Right ventricle myocardium inferior (tissue), 1 donor: ENCODE measurements at regions of chr7 and their contacts with region 1.

Region 1: DNA sequence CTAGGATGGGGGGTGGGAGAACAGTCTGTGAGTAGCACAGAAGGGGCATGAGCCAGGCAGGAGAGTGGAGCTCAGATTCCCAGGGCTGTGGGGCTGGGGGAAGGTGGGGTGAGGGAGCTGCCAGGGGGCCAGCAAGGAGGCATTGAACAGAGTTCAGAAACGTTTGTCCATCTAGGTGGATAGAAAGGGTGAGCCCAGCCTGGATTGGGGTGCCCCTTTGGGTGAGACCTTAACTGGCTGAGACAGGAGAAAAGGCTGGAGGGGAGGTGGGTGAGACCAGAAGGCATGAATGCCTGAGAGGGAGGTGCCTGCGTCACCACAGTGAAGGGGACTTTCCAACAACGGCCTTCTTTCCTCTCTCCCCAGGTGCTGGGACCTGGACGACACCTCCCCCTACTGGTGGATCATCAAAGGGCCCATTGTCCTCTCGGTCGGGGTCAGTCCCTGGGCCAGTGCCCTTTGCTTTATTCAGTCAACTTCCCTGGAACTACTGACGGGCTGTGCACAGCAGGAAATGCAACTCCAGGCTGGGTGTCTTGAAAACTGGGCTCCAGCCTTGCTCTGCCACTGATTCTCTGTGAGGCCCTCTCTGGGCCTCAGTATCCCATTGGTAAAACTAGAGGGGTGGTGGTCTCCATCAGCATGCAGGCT is 11.0 kb downstream of the GHRHR start:
- DNase-seq: no peak
- ATAC-seq: peak; percentile 69

Region 2: DNA sequence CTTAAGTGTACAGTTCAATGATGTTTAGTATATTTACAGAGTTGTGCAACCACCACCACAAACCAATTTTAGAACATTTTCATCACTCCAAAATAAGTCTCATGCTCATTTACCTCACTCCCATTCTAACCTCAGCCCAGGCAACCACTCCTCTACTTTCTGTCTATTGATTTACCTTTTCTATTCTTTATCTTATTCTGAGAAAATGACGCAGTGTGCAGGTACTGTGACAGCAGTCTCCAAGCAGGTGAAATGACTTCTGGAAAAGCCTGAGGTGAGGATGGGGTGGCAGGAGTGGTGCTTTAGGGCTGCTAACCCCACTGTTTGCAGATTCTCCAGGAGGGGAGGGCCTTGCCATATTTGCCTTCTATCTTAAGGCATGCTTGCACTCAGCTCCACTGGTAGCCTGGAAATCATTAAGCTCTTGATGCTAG is 340.5 kb before region 1 on chr7:
- intact Hi-C with region 1: no loop called
- DNase-seq: no peak
- ATAC-seq: no peak

Region 3: DNA sequence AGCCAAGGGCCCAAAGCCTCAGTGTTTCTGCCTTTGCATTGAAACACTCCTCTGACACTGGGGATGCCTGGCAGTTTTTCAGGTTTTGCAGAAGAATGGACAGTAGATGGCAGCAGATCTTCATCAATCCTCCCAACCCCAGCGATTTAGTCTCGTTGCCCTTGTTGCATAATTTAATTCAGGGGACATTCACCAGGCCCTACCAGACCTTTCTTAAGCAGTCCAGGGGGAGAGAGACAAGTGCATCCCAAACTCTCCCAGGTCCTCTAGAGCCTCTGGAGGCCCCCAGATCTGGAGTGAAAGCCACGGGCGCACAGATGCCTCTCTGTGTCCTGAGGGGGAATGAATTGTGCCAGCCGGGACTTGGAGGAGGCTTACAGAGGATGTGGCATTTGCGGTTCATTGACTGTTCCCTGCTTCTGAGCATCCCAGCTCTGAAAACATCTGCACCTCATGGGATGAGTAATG is 173.9 kb before region 1 on chr7:
- intact Hi-C with region 1: loop called (anchors 1 kb)
- DNase-seq: no peak
- ATAC-seq: peak; percentile 70

Region 4: DNA sequence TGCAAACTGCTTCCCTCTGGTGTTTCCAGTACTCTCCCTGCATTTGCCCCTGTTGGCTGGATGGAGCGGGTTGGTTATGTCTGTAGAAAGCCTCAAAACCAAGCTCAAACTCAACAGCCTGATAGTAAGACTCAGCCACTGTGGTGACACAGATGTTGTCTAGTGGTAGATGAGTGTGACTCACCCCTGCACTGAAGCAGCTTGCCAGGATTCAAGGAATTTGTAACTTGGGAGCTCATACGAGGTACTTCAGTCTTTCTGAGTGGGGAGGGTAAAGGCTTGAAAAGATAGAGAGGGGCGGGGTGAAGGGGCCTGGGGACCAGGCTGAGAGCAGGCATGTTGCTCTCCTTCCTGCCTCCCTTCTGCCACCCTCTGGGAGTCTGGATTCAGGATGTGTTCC is 86.0 kb before region 1 on chr7:
- intact Hi-C with region 1: loop called (anchors 5 kb)
- DNase-seq: no peak
- ATAC-seq: peak; percentile 61

Region 5: GRCh38 chr7:30938435-30939316 is 36.1 kb before region 1 on chr7:
- intact Hi-C with region 1: loop called (anchors 5 kb)
- DNase-seq: peak; percentile 91
- ATAC-seq: peak; percentile 85